ENCODE measurements at regions of chr19 and their contacts with region 1.

Region 1: GRCh38 chr19:46759817-46760333 is 13.6 kb upstream of the STRN4 start:
- DNase-seq: peak; percentile 64
- H3K4me3 ChIP-seq: no peak overlapping the region
- H3K27ac ChIP-seq: peak overlapping the region; percentile 71 to 81
- H3K4me1 ChIP-seq: peaks cover 5% of the 10 kb centered on the region
- H3K27me3 ChIP-seq: no peaks in the 10 kb centered on the region
- CTCF ChIP-seq: no peak
- POLR2A ChIP-seq: no peak

Region 2: DNA sequence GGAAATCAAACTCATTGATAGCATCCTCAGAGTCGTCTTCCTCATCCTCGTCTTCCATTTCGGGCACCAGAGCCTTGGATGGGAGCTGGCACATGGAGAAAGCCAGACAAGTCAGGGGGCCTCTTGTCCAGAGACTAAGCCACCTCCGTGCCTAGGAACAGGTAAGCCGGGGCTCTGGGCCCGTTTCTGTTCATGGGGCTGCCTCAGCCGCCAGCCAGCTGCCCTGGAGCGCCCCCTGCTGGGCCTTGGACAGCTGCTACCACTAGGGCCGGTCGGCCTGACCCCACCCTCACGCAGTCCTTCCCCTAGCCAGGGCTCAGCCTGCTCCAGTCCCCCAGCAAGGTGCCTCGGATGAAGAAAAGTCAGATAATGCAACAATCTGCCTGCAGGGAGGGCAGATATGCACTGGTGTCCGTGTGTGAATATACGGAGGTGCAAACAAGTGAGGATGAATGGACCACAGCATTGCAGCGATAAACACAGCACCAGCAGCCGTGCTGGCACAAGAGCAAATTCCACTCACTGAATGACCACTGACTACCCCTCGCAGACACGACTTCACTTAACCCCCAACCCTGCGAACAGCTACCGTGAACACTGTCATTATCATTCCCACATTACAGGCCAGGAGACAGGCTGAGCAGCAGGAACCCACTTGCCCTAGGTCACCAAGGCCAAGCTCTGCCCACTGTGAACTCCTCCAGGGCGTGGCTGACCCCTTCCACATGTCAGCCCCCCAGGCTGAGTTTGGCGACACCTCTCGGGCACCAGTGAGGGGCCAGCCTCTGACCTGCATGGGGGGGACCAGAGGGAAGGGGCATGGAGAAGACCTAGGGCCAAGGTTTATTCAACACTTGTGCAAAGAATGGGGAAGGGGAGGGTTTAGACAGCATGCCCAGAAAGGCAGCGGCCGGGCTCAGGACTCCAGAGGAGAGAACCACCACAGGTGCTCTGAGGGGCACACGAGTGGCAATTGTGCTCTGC is 30.9 kb before region 1 on chr19:
- intact Hi-C with region 1: no loop called
- DNase-seq: peak; percentile 60
- H3K4me3 ChIP-seq: no peak overlapping the region
- H3K27ac ChIP-seq: no peak overlapping the region
- H3K4me1 ChIP-seq: no peaks in the 10 kb centered on the region
- H3K27me3 ChIP-seq: no peaks in the 10 kb centered on the region
- CTCF ChIP-seq: peak; percentile 72 to 89 (median 79)
- POLR2A ChIP-seq: no peak

Region 3: DNA sequence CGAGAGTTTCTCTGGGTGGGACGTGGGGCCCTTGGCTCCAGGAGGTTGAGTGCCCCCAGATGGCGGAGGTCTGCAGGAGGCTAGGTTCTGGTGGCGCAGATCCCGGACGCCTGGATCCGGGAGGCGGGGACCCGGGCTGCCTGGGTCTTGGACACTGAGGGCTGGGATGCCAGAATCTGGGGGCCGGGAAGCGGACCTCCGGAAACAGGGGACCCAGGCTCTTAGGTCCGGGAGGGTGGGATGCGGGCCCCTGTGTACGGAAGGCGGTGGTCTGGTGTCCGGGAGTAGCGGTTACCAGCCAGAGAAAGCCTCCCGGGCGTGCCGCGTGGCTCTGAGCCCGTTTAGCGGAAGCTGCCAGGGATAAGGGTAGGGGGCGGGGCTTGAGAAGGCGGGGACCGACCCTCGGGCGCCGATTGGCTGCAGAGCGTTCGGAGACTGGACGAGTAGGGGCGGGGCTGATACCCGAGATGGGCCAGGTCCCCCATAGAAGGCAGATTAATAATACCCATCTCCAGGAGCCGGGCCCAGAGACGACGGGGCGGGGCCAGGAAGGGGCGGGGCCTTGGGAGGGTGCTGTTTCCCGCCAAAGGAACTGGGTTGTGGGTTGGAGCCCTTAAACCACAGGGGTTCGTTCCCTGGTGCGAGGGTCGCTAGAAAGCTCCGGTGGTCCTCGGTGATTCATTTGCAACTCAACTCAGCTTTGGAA is 28.5 kb after region 1 on chr19 and contains the start of gene SLC1A5:
- intact Hi-C with region 1: loop called (anchors 2 kb)
- DNase-seq: peak; percentile 98
- H3K4me3 ChIP-seq: peak within 1 kb of the TSS; percentile 76 to 93
- H3K27ac ChIP-seq: peak within 1 kb of the TSS; percentile 89 to 92
- H3K4me1 ChIP-seq: peaks cover 10% of the 10 kb centered on the region
- H3K27me3 ChIP-seq: no peaks in the 10 kb centered on the region
- CTCF ChIP-seq: no peak
- POLR2A ChIP-seq: peak; percentile 97
- total RNA-seq, gene SLC1A5: 122 to 214 TPM

Region 4: GRCh38 chr19:46813839-46814363 is 54.0 kb after region 1 on chr19:
- intact Hi-C with region 1: no loop called
- DNase-seq: peak; percentile 85
- H3K4me3 ChIP-seq: no peak overlapping the region
- H3K27ac ChIP-seq: peak overlapping the region; percentile 63 to 69
- H3K4me1 ChIP-seq: no peaks in the 10 kb centered on the region
- H3K27me3 ChIP-seq: no peaks in the 10 kb centered on the region
- CTCF ChIP-seq: no peak
- POLR2A ChIP-seq: no peak

Region 5: GRCh38 chr19:46839752-46840135 is 79.9 kb after region 1 on chr19:
- intact Hi-C with region 1: loop called (anchors 2 kb)
- DNase-seq: no peak
- H3K4me3 ChIP-seq: no peak overlapping the region
- H3K27ac ChIP-seq: peak overlapping the region; percentile 68 to 75
- H3K4me1 ChIP-seq: peaks cover 10% of the 10 kb centered on the region
- H3K27me3 ChIP-seq: no peaks in the 10 kb centered on the region
- CTCF ChIP-seq: no peak
- POLR2A ChIP-seq: no peak

Region 6: DNA sequence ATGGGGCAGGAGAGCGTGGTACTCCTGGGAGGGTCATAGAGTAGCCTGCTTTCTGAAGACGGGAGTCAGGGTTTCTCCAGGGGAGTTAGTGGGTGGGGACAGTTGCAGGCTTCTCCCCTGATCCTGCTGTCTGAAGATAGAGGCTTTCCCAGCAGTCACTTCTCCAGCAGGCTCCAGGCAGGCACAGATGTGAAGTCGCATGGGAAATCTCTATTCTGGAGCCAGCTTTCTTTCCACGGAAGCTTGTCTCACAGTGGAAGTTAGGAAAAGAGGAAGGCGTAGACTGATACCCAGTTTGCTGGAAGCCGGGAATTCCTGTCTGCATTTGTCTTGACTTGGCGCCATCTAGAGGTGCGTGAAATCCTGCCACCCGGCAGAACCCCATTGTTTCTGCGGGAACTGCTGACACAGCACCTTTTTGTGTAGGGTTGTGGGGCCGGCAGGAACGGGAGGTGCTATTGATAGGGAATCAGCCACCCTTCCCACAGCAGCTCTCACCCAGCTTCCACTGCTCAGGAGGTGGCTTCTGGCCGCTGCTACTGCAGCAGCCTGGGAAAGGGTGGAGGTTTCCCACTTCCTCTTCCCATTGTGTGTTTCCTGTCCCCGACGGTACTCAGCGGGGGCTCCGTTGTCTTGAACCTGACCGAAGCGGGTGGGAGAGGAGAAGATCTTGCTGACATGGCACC is 231.3 kb after region 1 on chr19:
- intact Hi-C with region 1: loop called (anchors 5 kb)
- DNase-seq: peak; percentile 81
- H3K4me3 ChIP-seq: no peak overlapping the region
- H3K27ac ChIP-seq: peak overlapping the region; percentile 40 to 45
- H3K4me1 ChIP-seq: no peaks in the 10 kb centered on the region
- H3K27me3 ChIP-seq: no peaks in the 10 kb centered on the region
- CTCF ChIP-seq: peak; percentile 42 to 95 (median 88)
- POLR2A ChIP-seq: no peak